Posterior cingulate gyrus (tissue), 11 donors: ENCODE measurements at regions of chr10 and their contacts with region 1.

Region 1: GRCh38 chr10:70363971-70364771 is 18.3 kb downstream of the LRRC20 start:
- DNase-seq: peak; percentile 82 to 98 (median 91)

Region 2: GRCh38 chr10:70146489-70147258 is 217.5 kb before region 1 on chr10 and contains the start of gene TYSND1:
- intact Hi-C with region 1: loop called (anchors 10 kb)
- DNase-seq: peak; percentile 95 to 99 (median 98)

Region 3: GRCh38 chr10:70191972-70192305 is 172.2 kb before region 1 on chr10:
- intact Hi-C with region 1: no loop called
- DNase-seq: no peak

Region 4: DNA sequence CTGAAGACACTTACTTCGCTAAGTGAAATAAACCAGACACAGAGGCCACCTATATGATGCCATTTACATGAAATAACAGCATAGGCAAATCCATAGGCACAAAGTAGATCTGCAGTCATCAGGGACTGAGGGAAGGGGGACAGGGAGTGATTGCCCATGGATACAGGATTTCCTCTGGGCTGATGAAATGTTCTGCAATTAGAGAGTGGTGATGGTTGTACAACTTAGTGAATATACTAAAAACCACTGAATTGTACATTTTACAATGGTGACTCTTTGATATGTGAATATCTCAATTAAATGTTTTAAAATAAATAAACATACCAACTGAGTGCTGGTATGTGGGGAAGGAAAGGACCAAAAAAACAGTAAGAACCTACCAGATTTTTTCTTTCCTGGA is 151.3 kb before region 1 on chr10:
- intact Hi-C with region 1: no loop called
- DNase-seq: no peak

Region 5: GRCh38 chr10:70227548-70228320 is 136.4 kb before region 1 on chr10:
- intact Hi-C with region 1: loop called (anchors 1 kb)
- DNase-seq: no peak